MCF 10A (cell line): ENCODE measurements at regions of chr11 and their contacts with region 1.

Region 1: DNA sequence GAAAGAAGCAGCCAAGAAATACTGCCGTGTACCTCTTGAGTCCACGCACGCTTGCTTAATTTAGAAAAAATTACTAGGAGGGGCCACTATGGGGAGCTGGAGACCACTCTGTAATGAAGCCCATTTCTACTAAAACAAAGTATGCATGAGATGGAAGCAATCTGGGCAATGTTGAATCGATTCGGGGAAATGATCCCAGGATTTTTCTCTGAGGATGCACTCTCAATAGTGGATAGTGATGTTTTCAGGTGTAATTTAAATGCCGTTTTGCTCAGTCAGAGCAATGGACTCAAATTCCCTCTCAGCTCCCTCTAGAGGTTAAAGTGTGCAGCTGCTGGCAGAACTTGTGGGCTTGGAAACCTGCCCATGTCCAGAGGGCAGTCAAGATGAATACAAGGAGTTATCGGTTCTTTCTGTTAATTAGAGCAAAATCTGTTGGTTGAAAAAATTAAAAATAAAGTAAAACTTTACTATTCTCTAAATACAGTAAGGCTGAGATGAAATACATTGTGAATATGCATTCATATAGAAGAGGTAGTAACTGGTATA is 64.1 kb downstream of the ME3 start:
- DNase-seq: peak; percentile 82
- H3K4me3 Mint-ChIP-seq: no peak overlapping the region
- H3K27ac Mint-ChIP-seq: no peak overlapping the region
- H3K4me1 Mint-ChIP-seq: peaks cover 20% of the 10 kb centered on the region
- H3K27me3 Mint-ChIP-seq: no peaks in the 10 kb centered on the region
- CTCF ChIP-seq: peak; percentile 89

Region 2: DNA sequence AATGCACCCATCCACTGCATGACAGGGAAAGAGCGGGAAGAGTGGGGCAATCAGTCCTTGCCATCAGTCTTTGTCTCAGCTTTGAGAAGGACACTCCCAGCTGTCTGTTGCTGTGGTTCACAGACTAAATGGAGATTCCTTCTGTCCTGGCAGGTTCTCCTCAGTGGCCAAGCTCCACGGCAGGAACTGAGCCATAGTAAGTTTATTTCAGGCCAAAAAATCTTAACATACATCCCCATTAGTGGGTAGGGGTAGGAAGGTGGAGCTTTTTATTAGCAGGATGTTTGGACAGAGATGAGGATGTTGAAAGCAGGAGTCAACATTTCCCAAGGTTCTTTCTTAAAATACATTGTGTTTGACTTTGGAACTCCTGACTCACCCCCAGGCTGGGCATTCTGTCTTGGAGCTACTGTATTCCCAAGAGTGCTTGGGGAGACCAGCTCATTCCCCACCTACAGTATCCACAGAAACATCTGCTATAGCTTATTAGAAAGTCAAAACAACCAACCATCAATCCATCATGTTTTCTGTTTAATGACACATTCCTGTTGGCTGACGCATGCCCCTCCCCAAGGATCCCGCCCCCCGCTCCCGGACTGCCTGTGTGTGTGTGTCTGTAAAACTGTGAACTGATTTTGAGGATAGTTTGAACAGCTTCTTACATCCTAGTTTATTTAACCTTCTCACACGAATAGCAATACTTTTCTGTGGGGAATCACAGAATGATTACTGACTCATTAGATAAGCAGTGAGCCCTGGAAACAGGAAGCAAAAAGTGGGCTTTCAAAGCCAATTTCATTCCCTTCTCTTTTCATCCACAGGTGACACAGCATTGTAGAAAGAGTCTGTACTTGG is 124.2 kb before region 1 on chr11:
- CTCF ChIA-PET with region 1: interaction called, 18 read pairs
- POLR2A ChIA-PET with region 1: no interaction called
- intact Hi-C with region 1: no loop called
- DNase-seq: peak; percentile 88
- H3K4me3 Mint-ChIP-seq: no peak overlapping the region
- H3K27ac Mint-ChIP-seq: peak overlapping the region; percentile 39
- H3K4me1 Mint-ChIP-seq: peaks cover 36% of the 10 kb centered on the region
- H3K27me3 Mint-ChIP-seq: no peaks in the 10 kb centered on the region
- CTCF ChIP-seq: no peak

Region 3: GRCh38 chr11:86620891-86621521 is 12.7 kb after region 1 on chr11:
- CTCF ChIA-PET with region 1: interaction called, 10 read pairs
- POLR2A ChIA-PET with region 1: interaction called, 3 read pairs
- intact Hi-C with region 1: no loop called
- DNase-seq: no peak
- H3K4me3 Mint-ChIP-seq: no peak overlapping the region
- H3K27ac Mint-ChIP-seq: no peak overlapping the region
- H3K4me1 Mint-ChIP-seq: peaks cover 14% of the 10 kb centered on the region
- H3K27me3 Mint-ChIP-seq: no peaks in the 10 kb centered on the region
- CTCF ChIP-seq: no peak

Region 4: DNA sequence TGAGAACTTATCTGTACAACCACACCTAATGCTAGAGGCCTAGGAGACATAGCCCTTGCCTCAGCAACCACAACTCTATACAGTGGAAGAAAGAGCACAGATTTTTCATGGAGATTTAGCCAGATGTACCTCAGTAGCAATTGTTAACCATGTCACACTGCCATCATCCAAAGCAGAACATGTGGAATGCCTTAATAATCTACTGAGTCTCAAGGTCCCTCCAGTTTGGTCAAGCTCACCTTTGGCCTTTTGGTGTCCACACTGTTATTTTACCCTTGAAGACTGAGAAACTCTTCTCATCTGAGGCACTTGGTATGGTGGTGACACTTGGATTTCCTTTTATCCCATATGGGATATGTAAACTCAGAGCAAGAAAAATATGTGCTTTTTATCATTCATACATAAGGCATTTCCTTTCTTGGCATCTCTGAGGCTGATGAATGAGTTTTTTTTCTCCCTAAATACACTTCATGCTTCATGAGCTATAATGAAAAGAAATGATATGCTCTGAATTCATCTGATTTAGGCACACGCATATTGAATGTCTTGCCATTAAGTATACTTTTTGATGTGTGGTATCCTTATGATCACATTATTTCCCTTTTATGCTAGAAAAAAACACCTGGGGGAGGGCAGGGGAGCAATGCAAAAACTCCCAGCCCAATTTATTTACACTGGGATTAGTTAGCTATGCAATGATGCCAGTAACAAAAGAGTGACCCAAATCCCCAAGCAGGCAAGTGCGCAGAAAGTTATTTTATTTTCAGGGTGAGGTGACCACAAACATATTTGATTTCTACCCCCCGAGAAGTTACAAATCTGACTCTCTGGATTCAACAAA is 127.4 kb after region 1 on chr11:
- CTCF ChIA-PET with region 1: no interaction called
- POLR2A ChIA-PET with region 1: no interaction called
- intact Hi-C with region 1: no loop called
- DNase-seq: no peak
- H3K4me3 Mint-ChIP-seq: no peak overlapping the region
- H3K27ac Mint-ChIP-seq: no peak overlapping the region
- H3K4me1 Mint-ChIP-seq: peaks cover 47% of the 10 kb centered on the region
- H3K27me3 Mint-ChIP-seq: no peaks in the 10 kb centered on the region
- CTCF ChIP-seq: no peak

Region 5: GRCh38 chr11:86802601-86803051 is 194.3 kb after region 1 on chr11:
- CTCF ChIA-PET with region 1: interaction called, 8 read pairs
- POLR2A ChIA-PET with region 1: no interaction called
- intact Hi-C with region 1: loop called (anchors 1 kb)
- DNase-seq: peak; percentile 61
- H3K4me3 Mint-ChIP-seq: no peak overlapping the region
- H3K27ac Mint-ChIP-seq: no peak overlapping the region
- H3K4me1 Mint-ChIP-seq: peaks cover 11% of the 10 kb centered on the region
- H3K27me3 Mint-ChIP-seq: no peaks in the 10 kb centered on the region
- CTCF ChIP-seq: peak; percentile 69

Region 6: GRCh38 chr11:86818466-86819192 is 210.3 kb after region 1 on chr11:
- CTCF ChIA-PET with region 1: interaction called, 22 read pairs
- POLR2A ChIA-PET with region 1: no interaction called
- intact Hi-C with region 1: loop called (anchors 1 kb)
- DNase-seq: peak; percentile 75
- H3K4me3 Mint-ChIP-seq: no peak overlapping the region
- H3K27ac Mint-ChIP-seq: no peak overlapping the region
- H3K4me1 Mint-ChIP-seq: peaks cover 21% of the 10 kb centered on the region
- H3K27me3 Mint-ChIP-seq: no peaks in the 10 kb centered on the region
- CTCF ChIP-seq: peak; percentile 59